Right ventricle myocardium inferior (tissue), 1 donor: ENCODE measurements at regions of chr18 and their contacts with region 1.

Region 1: DNA sequence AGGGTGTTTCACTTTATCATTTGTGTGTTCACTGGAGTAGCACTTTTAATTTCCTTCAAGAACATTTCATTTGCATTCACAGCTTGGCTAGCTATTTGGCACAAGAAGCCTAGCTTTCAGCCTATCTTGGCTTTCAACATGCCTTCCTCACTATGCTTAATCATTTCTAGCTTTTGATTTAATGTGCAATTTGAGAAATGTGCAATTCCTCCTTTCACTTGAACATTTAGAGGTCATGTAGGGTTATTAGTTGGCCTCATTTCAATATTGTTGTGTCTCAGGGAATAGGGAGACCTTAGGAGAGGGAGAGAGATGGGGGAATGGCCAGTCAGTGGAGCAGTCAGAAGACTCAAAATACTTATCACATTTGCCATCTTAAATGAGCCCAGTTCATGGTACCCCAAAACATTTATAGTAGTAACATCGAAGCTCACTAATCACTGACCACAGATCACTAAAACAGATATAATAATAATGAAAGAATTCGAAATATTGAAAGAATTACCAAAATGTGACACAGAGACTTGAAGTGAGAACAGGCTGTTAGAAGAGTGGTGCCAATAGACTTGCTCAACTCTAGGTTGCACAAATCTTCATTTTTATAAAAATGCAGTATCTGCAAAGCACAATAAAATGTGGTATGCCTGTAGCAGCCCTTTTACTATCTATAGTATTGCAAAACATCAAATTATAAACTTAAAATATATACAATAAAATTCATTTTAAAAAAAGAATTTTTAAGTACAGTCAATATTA is 561.2 kb downstream of the METTL4 start:
- DNase-seq: no peak
- ATAC-seq: peak; percentile 81

Region 2: DNA sequence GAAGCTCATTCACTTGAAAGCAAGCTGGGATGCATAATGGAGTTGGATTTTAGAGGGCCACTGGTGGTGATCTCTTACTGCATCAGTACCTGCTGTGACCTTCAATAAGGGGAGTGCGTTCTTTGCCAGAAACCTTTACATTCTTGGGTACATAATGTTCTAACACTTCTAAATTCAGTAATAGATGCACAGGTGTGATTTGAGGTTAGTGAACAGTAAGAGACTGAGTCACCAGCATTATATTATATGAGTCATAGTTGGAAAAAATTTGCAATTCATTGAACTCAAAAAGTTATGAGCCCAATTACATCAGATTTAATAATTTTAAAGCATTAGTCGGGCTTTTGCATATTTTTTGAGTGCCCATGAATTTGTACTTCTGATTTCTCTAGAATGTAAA is 302.1 kb before region 1 on chr18:
- intact Hi-C with region 1: no loop called
- DNase-seq: no peak
- ATAC-seq: no peak

Region 3: DNA sequence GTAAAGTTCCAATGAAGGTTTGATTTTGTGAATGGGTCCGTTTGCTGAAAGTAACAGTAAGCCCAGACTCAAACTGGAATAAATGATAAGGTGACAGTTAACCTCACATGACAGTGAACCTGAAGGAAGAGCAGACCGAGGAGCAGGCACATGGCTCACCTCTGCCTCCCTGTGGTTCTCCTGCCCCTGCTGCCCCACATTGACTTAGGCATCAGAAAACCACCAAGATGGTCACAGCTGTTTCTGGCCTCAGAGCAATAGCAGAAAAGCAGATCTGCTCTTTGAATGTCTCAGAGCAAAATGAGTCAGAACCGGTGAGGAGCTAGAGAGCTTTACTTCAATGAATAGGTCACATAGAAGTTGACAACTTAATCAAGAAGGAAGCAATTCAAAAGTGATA is 73.6 kb after region 1 on chr18:
- intact Hi-C with region 1: loop called (anchors 5 kb)
- DNase-seq: no peak
- ATAC-seq: no peak

Region 4: GRCh38 chr18:2111456-2111855 is 101.3 kb after region 1 on chr18:
- intact Hi-C with region 1: no loop called
- DNase-seq: no peak
- ATAC-seq: no peak